ENCODE measurements at regions of chr17 and their contacts with region 1.

Region 1: DNA sequence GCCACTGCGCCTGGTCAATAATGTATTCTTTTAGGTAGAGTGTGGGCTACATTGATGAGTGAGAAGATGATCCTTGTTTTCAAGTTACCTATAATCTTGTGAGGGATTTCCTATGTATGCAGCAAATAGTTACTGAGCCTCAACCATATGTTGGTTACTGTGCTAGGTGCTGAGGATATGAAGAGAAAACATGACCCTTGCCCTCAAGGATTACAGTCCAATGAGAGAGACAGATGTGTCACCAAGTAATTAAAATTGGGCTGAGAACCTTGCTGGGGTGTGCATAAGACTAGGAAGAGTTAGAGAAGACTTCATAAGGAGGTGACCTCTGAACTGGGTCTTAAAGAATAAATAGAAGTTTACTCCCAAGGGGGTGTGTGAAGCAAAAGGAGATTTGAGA is 7.4 kb downstream of the POLR2A start:
- DNase-seq: no peak
- H3K4me3 ChIP-seq: no peak overlapping the region
- H3K27ac ChIP-seq: no peak overlapping the region
- H3K4me1 ChIP-seq: 0 out of 7 replicates have a peak, but pooled peaks cover 0 to 2% (median 0%) of the 10 kb centered on the region in 4 experiments
- H3K27me3 ChIP-seq: no peaks in the 10 kb centered on the region
- CTCF ChIP-seq: no peak
- EP300 ChIP-seq: no peak
- POLR2A ChIP-seq: no peak
- RAD21 ChIP-seq: no peak

Region 2: GRCh38 chr17:7502987-7503386 is 11.4 kb after region 1 on chr17:
- CTCF ChIA-PET with region 1: interaction called, 11 read pairs
- POLR2A ChIA-PET with region 1: interaction called, 58 read pairs
- DNase-seq: peak in 1 of 2 experiments; percentile 67
- H3K4me3 ChIP-seq: no peak overlapping the region
- H3K27ac ChIP-seq: no peak overlapping the region
- H3K4me1 ChIP-seq: no peaks in the 10 kb centered on the region
- H3K27me3 ChIP-seq: no peaks in the 10 kb centered on the region
- CTCF ChIP-seq: peak; percentile 51 to 68 (median 65)
- EP300 ChIP-seq: no peak
- POLR2A ChIP-seq: peak in 1 of 2 experiments; percentile 34; a peak in 2 of 3 replicates
- RAD21 ChIP-seq: peak; percentile 71 to 76